CD4-positive, alpha-beta memory T cell (primary cell): ENCODE measurements at regions of chr5 and their contacts with region 1.

Region 1: DNA sequence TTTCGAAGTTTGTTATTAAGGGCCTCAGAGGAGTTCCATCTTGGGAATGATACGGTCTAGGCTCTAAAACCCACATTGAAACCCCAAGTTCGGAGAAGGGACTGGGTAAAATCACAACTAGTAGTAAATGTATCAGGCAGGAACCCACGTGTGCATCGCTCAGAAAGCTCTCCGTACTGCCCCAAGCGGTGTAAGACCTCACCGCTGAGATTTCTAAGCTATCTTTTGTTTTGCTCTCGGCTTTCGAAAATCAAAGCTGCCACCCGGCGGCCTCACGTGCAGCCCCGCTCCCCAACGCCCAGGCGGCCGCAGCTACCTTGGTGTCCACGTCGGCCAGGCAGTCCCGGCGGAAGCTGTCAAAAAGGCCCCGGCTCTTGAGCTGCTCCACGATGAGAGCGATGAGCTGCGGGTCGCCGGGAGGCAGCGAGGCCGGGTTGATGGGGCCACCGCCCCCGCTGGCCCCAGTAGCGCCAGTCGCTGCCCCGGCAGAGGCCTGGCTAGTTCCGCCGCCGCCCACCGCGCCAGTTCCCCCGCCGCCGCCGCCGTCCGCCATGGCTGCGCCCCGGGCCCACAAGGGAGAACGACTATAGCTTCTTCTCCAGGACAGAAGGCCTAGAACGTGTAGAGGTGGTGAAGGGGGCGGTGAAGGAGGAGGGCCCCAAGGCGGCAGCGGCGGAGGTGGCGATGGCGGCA is 420 bp downstream of the BOD1 start:
- DNase-seq: peak; percentile 69 to 82 (median 75)
- H3K4me3 ChIP-seq: peak overlapping the region; percentile 18 to 83
- H3K4me3 Mint-ChIP-seq: peak overlapping the region; percentile 91 to 97 (median 93)
- H3K27ac ChIP-seq: peak overlapping the region; percentile 94
- H3K27ac Mint-ChIP-seq: peak overlapping the region; percentile 88 to 98 (median 95)
- H3K4me1 ChIP-seq: peaks cover 30% of the 10 kb centered on the region
- H3K4me1 Mint-ChIP-seq: peaks cover 34 to 54% (median 43%) of the 10 kb centered on the region in 4 donors
- H3K27me3 ChIP-seq: no peaks in the 10 kb centered on the region
- H3K27me3 Mint-ChIP-seq: no peaks in the 10 kb centered on the region

Region 2: GRCh38 chr5:172958331-172959046 is 657.5 kb before region 1 on chr5:
- CTCF ChIA-PET with region 1: no interaction called
- POLR2A ChIA-PET with region 1: no interaction called
- intact Hi-C with region 1: loop called (anchors 1 kb)
- DNase-seq: peak; percentile 62 to 70 (median 67)
- H3K4me3 ChIP-seq: peak overlapping the region in 1 of 2 donors; percentile 97
- H3K4me3 Mint-ChIP-seq: peak overlapping the region; percentile 86 to 98 (median 96)
- H3K27ac ChIP-seq: peak overlapping the region; percentile 82
- H3K27ac Mint-ChIP-seq: peak overlapping the region; percentile 92 to 99 (median 98)
- H3K4me1 ChIP-seq: peaks cover 16% of the 10 kb centered on the region
- H3K4me1 Mint-ChIP-seq: peaks cover 18 to 43% (median 27%) of the 10 kb centered on the region in 4 donors
- H3K27me3 ChIP-seq: no peaks in the 10 kb centered on the region
- H3K27me3 Mint-ChIP-seq: no peaks in the 10 kb centered on the region

Region 3: GRCh38 chr5:173573126-173573960 is 42.7 kb before region 1 on chr5:
- CTCF ChIA-PET with region 1: interaction called, 10 read pairs
- POLR2A ChIA-PET with region 1: no interaction called
- intact Hi-C with region 1: no loop called
- DNase-seq: peak; percentile 39 to 53 (median 50)
- H3K4me3 ChIP-seq: peak overlapping the region in 1 of 2 donors; percentile 19
- H3K4me3 Mint-ChIP-seq: peak overlapping the region in 2 of 8 donors; percentile 6
- H3K27ac ChIP-seq: no peak overlapping the region
- H3K27ac Mint-ChIP-seq: peak overlapping the region in 1 of 7 donors; percentile 20
- H3K4me1 ChIP-seq: peaks cover 4% of the 10 kb centered on the region
- H3K4me1 Mint-ChIP-seq: peaks cover 3 to 10% (median 6%) of the 10 kb centered on the region in 4 donors
- H3K27me3 ChIP-seq: peaks cover 5% of the 10 kb centered on the region
- H3K27me3 Mint-ChIP-seq: peaks cover 8 to 20% of the 10 kb centered on the region in 2 donors

Region 4: GRCh38 chr5:173653822-173654495 is 37.9 kb after region 1 on chr5:
- CTCF ChIA-PET with region 1: no interaction called
- POLR2A ChIA-PET with region 1: no interaction called
- intact Hi-C with region 1: no loop called
- DNase-seq: no peak
- H3K4me3 ChIP-seq: no peak overlapping the region
- H3K4me3 Mint-ChIP-seq: no peak overlapping the region
- H3K27ac ChIP-seq: no peak overlapping the region
- H3K27ac Mint-ChIP-seq: no peak overlapping the region
- H3K4me1 ChIP-seq: no peaks in the 10 kb centered on the region
- H3K4me1 Mint-ChIP-seq: no peaks in the 10 kb centered on the region
- H3K27me3 ChIP-seq: no peaks in the 10 kb centered on the region
- H3K27me3 Mint-ChIP-seq: peaks cover 14 to 19% of the 10 kb centered on the region in 2 donors

Region 5: GRCh38 chr5:173887610-173888472 is 271.8 kb after region 1 on chr5 and contains the start of gene CPEB4:
- CTCF ChIA-PET with region 1: interaction called, 27 read pairs
- POLR2A ChIA-PET with region 1: interaction called, 28 read pairs
- intact Hi-C with region 1: loop called (anchors 1 kb)
- DNase-seq: peak; percentile 96 to 99 (median 98)
- H3K4me3 ChIP-seq: peak within 1 kb of the TSS; percentile 52 to 68
- H3K4me3 Mint-ChIP-seq: peak within 1 kb of the TSS; percentile 95 to 99 (median 98)
- H3K27ac ChIP-seq: peak within 1 kb of the TSS; percentile 68
- H3K27ac Mint-ChIP-seq: peak within 1 kb of the TSS; percentile 91 to 99 (median 98)
- H3K4me1 ChIP-seq: peaks cover 81% of the 10 kb centered on the region
- H3K4me1 Mint-ChIP-seq: peaks cover 69 to 92% (median 76%) of the 10 kb centered on the region in 4 donors
- H3K27me3 ChIP-seq: no peaks in the 10 kb centered on the region
- H3K27me3 Mint-ChIP-seq: no peaks in the 10 kb centered on the region
- total RNA-seq, gene CPEB4: 17.1 to 18.3 TPM

Region 6: DNA sequence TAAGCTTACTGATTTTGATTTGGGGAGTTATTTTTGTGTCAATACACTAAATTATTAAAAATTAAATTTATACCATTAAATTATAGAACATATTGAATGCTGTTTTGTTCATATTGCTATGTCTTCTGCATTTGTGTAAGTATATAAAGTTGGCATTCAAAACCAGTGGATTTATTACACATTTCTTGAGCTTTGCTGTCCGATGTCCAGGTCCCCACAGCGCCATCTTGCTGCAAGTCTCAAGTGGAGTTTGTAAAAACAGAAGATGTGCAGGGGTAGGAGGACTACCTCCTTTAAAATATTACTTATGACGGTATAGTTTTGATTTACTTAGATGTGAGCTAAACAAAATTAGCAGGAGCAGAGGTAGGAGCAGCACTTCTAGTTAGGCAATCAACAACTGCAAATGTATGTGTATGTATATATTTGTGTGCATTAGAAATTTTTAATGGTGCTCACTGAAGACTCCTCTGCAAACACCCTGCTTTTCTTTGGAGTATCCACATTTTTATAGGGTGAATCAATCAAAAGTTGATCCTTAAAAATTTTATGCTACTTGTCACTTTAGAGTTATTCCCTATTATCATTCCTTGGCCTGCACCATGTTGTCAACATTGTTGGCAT is 309.5 kb after region 1 on chr5:
- CTCF ChIA-PET with region 1: interaction called, 116 read pairs
- POLR2A ChIA-PET with region 1: interaction called, 6 read pairs
- intact Hi-C with region 1: loop called (anchors 1 kb)
- DNase-seq: peak; percentile 18 to 40 (median 38)
- H3K4me3 ChIP-seq: no peak overlapping the region
- H3K4me3 Mint-ChIP-seq: no peak overlapping the region
- H3K27ac ChIP-seq: no peak overlapping the region
- H3K27ac Mint-ChIP-seq: no peak overlapping the region
- H3K4me1 ChIP-seq: peaks cover 4% of the 10 kb centered on the region
- H3K4me1 Mint-ChIP-seq: peaks cover 5 to 15% (median 10%) of the 10 kb centered on the region in 4 donors
- H3K27me3 ChIP-seq: no peaks in the 10 kb centered on the region
- H3K27me3 Mint-ChIP-seq: no peaks in the 10 kb centered on the region

Region 7: GRCh38 chr5:174935854-174936474 is 1319.9 kb after region 1 on chr5:
- CTCF ChIA-PET with region 1: no interaction called
- POLR2A ChIA-PET with region 1: no interaction called
- intact Hi-C with region 1: loop called (anchors 10 kb)
- DNase-seq: peak in 4 of 5 donors; percentile 7 to 13 (median 11)
- H3K4me3 ChIP-seq: no peak overlapping the region
- H3K4me3 Mint-ChIP-seq: no peak overlapping the region
- H3K27ac ChIP-seq: no peak overlapping the region
- H3K27ac Mint-ChIP-seq: no peak overlapping the region
- H3K4me1 ChIP-seq: no peaks in the 10 kb centered on the region
- H3K4me1 Mint-ChIP-seq: peaks cover 0 to 7% (median 1%) of the 10 kb centered on the region in 4 donors
- H3K27me3 ChIP-seq: no peaks in the 10 kb centered on the region
- H3K27me3 Mint-ChIP-seq: peaks cover 12% of the 10 kb centered on the region in 2 donors